HepG2 (cell line): ENCODE measurements at regions of chr12 and their contacts with region 1.

Region 1: GRCh38 chr12:58920102-58920960 is at the start of gene LRIG3:
- DNase-seq: peak; percentile 76
- ATAC-seq: peak; percentile 92
- H3K4me3 ChIP-seq: peak within 1 kb of the TSS; percentile 80 to 95 (median 92)
- H3K27ac ChIP-seq: peak within 1 kb of the TSS; percentile 94
- H3K4me1 ChIP-seq: peaks cover 42% of the 10 kb centered on the region
- H3K27me3 ChIP-seq: no peaks in the 10 kb centered on the region
- CTCF ChIP-seq: peak; percentile 31; the same call in 1 of the 2 replicates
- EP300 ChIP-seq: no peak; a peak in 1 of 4 replicates
- POLR2A ChIP-seq: peak; percentile 60 to 62; a peak in 3 of 4 replicates
- RAD21 ChIP-seq: peak; percentile 31
- total RNA-seq, gene LRIG3: 9.9 and 17.4 TPM in 2 replicates

Region 2: DNA sequence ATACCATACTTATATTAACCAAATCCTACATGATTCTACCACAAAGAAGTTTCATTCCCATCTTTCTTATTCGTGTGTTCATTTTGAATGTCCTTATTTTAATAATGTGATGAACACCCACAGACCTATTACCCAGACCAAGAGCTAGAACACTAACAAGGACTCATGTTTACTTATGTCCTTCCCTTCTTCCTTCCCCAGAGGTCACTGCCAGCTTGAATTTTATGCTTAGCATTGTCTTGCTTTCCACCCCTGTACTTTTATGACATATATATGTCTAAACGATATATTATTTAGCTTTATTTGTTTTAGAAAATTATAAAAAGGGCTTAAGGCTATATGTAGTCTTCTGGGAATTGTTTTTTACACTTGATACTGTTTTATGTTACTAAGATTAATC is 238.6 kb before region 1 on chr12:
- CTCF ChIA-PET with region 1: no interaction called
- POLR2A ChIA-PET with region 1: no interaction called
- in situ Hi-C with region 1: no loop called
- intact Hi-C with region 1: loop called (anchors 10 kb)
- DNase-seq: no peak
- ATAC-seq: peak; percentile 47; the same call in 1 of the 3 replicates
- H3K4me3 ChIP-seq: no peak overlapping the region
- H3K27ac ChIP-seq: no peak overlapping the region
- H3K4me1 ChIP-seq: no peaks in the 10 kb centered on the region
- H3K27me3 ChIP-seq: no peaks in the 10 kb centered on the region
- CTCF ChIP-seq: peak; percentile 60
- EP300 ChIP-seq: no peak
- POLR2A ChIP-seq: no peak
- RAD21 ChIP-seq: no peak

Region 3: DNA sequence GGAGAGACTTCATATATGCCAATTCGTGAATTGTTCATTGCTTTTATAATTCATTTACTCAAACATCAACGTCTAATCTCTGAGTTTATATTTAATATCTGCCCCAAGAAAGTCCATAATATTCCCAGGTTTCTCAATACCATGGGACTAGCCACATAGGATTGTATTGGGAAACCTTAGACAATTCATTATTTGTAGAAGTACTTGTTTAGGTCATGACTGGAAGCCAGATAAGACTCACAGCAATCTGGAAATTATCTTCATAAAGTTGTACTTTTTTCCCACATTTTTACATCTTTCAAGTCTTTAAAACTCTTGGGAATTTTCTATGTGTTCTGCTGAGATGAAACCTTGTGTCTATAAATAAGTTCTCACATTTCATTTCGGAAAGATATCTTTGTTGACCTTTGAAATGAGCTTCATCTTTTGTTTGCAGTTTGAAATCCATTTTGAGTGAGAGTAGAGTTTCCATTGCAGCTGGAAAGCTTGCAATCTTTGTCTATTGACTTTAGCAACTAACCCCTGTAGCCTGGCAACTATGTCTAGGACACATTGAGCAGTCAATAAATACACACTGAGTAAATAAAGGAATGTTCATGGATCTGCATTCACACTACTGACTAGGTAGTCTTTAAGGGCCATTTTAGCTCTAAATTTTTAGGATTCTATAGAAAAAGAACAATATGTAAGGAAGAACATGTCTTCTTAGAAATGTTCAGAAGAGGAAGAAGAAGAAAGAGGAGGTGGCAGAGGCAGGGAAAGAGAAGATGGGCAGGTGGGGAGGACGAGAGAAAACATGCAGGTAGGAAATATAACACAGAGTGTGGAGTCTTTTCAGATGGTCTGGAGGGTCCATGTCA is 154.4 kb before region 1 on chr12:
- CTCF ChIA-PET with region 1: no interaction called
- POLR2A ChIA-PET with region 1: interaction called, 3 read pairs
- in situ Hi-C with region 1: no loop called
- intact Hi-C with region 1: loop called (anchors 2 kb)
- DNase-seq: peak; percentile 96
- ATAC-seq: peak; percentile 99
- H3K4me3 ChIP-seq: peak overlapping the region; percentile 17 to 43 (median 33); a peak in 3 of 6 replicates
- H3K27ac ChIP-seq: peak overlapping the region; percentile 98
- H3K4me1 ChIP-seq: peaks cover 66% of the 10 kb centered on the region
- H3K27me3 ChIP-seq: no peaks in the 10 kb centered on the region
- CTCF ChIP-seq: no peak
- EP300 ChIP-seq: peak; percentile 91 to 96; a peak in 3 of 4 replicates
- POLR2A ChIP-seq: no peak
- RAD21 ChIP-seq: no peak

Region 4: DNA sequence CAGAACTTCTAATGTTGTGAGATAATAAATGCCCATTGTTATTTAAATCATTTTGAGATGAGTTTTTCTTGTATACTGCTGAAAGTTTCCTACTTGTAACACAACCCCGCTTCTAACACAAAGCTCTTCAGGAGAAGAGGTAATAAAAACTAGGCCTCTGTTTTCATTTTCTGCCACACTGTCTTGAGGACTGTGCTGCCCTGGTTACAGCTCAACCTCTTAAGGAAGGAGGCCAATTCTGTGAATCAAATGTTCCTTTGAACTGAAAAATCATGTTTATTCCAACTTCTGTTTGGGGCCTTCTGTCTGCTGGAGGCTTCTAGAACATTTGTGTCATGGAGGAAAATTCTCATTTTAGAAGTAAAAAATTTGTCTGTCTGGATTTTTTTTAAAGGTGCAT is 100.3 kb before region 1 on chr12:
- CTCF ChIA-PET with region 1: no interaction called
- POLR2A ChIA-PET with region 1: no interaction called
- in situ Hi-C with region 1: no loop called
- intact Hi-C with region 1: loop called (anchors 5 kb)
- DNase-seq: no peak
- ATAC-seq: no peak
- H3K4me3 ChIP-seq: no peak overlapping the region
- H3K27ac ChIP-seq: no peak overlapping the region
- H3K4me1 ChIP-seq: peaks cover 7% of the 10 kb centered on the region
- H3K27me3 ChIP-seq: no peaks in the 10 kb centered on the region
- CTCF ChIP-seq: no peak
- EP300 ChIP-seq: no peak
- POLR2A ChIP-seq: no peak
- RAD21 ChIP-seq: no peak

Region 5: DNA sequence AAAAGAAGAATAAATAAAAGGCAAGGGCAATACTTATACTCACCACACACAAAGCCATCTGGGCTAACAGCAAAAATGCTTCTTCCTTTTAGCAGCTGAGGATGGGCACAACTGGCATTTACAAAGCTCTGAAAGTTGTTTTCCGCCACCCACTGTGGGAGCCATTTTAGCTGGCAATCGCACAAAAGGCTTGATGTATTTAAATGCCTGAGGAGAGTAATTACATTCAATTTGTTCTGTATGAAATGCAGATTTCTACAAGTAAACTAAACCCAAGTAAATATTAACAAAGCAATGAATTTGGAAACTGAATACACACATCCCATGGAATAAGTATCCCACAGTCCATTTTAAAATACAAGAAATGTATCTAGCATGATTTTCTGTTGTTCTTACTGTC is 37.5 kb before region 1 on chr12:
- CTCF ChIA-PET with region 1: no interaction called
- POLR2A ChIA-PET with region 1: no interaction called
- in situ Hi-C with region 1: no loop called
- intact Hi-C with region 1: loop called (anchors 5 kb)
- DNase-seq: no peak
- ATAC-seq: no peak
- H3K4me3 ChIP-seq: no peak overlapping the region
- H3K27ac ChIP-seq: no peak overlapping the region
- H3K4me1 ChIP-seq: no peaks in the 10 kb centered on the region
- H3K27me3 ChIP-seq: no peaks in the 10 kb centered on the region
- CTCF ChIP-seq: no peak
- EP300 ChIP-seq: no peak
- POLR2A ChIP-seq: no peak
- RAD21 ChIP-seq: no peak